PC-3 (cell line): ENCODE measurements at regions of chr15 and their contacts with region 1.

Region 1: GRCh38 chr15:43185157-43186017 is at the start of gene CCNDBP1:
- DNase-seq: peak; percentile 91
- ATAC-seq: peak; percentile 93
- H3K4me3 ChIP-seq: peak within 1 kb of the TSS; percentile 92
- H3K27ac ChIP-seq: peak within 1 kb of the TSS; percentile 41
- H3K4me1 ChIP-seq: peaks cover 24% of the 10 kb centered on the region
- H3K27me3 ChIP-seq: no peaks in the 10 kb centered on the region
- CTCF ChIP-seq: peak; percentile 47
- total RNA-seq, gene CCNDBP1: 34.3 and 38.5 TPM in 2 replicates

Region 2: DNA sequence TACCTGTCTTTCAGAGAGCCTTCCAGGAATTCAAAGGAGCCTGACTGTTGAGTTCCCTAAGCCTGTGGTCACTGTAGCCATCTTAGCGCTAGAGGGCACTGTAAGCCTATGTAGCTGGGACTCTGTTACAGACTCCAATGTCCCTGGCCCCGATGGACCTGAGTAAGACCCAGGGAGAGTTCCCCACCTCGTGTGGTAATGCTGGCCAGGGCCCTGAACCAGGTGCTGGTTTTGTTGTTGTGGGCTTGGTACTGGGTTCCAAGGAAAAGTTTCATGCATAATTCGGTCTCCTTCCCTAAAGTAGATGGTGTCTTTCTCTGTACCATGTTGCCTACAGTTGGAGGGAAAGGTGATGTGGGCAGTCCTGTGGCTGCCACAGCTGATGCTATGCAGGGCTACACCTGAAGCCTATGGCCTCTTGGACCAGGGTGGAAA is 480.9 kb before region 1 on chr15:
- CTCF ChIA-PET with region 1: no interaction called
- POLR2A ChIA-PET with region 1: no interaction called
- intact Hi-C with region 1: loop called (anchors 10 kb)
- DNase-seq: peak; percentile 90
- ATAC-seq: peak; percentile 94
- H3K4me3 ChIP-seq: no peak overlapping the region
- H3K27ac ChIP-seq: no peak overlapping the region
- H3K4me1 ChIP-seq: peaks cover 22% of the 10 kb centered on the region
- H3K27me3 ChIP-seq: no peaks in the 10 kb centered on the region
- CTCF ChIP-seq: peak; percentile 97

Region 3: DNA sequence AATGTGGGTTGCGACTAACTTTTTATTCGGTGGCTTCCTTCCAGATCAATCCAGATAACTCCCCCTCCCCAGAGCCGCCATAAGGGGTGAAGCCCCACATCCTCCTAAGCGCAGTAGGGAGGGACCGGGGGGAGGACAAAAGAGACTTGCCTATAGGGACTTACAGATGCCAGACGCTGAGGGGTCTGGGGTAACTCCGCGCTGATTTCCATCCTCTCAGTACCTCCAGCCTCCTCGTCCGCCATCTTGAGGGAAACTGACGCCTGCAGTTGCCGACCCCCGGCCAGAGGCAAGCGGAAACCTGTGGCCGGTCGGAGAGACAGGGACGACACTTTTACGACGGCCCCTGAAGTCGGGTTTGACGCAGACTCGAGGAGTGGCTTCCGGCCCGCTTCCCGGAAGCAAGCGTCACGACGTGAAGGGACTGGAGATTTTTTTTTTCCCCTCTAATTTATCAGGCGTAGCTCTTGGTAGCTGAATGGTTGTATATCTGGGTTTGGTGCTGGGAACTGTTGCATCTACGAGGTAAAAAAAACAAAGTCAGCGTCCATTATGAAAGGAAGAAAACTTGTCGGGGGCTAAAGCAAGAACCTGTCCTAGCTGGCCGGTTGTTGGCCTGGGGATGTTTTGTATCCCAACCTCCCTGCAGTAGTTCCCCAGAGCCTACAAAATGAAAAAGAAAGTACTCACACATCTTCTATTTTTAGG is 79.5 kb before region 1 on chr15 and contains the start of gene UBR1:
- CTCF ChIA-PET with region 1: no interaction called
- POLR2A ChIA-PET with region 1: interaction called, 5 read pairs
- intact Hi-C with region 1: loop called (anchors 10 kb)
- DNase-seq: peak; percentile 86
- ATAC-seq: peak; percentile 93
- H3K4me3 ChIP-seq: peak within 1 kb of the TSS; percentile 76
- H3K27ac ChIP-seq: peak within 1 kb of the TSS; percentile 39
- H3K4me1 ChIP-seq: peaks cover 12% of the 10 kb centered on the region
- H3K27me3 ChIP-seq: no peaks in the 10 kb centered on the region
- CTCF ChIP-seq: no peak
- total RNA-seq, gene UBR1: 18.3 and 22.6 TPM in 2 replicates

Region 4: DNA sequence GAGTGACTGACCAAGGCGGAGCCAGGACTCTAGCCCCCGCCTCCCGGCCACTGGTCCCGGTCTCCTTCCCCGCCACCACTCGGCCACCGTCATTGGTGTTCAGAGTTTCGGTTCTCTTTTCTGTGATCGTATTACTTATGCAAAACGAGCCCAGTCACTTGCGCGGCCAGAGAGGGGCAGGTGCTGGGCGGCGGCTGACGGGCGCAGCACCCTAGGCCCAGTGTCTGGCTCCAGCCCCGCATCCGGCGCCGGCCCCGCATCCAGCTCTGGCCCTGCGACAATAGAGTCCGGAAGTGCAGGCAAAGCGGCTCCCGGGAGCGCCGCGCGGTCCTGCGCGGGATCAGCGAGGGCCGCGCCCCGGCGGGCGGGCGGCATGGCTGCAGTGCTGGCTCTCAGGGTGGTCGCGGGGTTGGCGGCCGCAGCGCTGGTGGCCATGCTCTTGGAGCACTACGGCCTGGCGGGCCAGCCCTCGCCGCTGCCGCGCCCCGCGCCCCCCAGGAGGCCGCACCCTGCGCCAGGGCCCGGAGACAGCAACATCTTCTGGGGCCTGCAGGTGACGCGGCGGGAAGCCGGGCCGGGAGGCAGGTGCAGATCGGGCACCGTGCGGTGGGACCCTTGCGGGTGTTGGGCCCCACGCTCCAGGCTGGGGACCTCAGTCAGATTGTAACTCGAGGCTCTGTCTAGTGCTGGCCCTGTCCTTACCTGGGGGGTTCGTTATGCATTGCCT is 51.8 kb before region 1 on chr15 and contains the start of gene TMEM62:
- CTCF ChIA-PET with region 1: no interaction called
- POLR2A ChIA-PET with region 1: no interaction called
- intact Hi-C with region 1: loop called (anchors 2 kb)
- DNase-seq: peak; percentile 86
- ATAC-seq: peak; percentile 88
- H3K4me3 ChIP-seq: peak within 1 kb of the TSS; percentile 86
- H3K27ac ChIP-seq: peak within 1 kb of the TSS; percentile 24
- H3K4me1 ChIP-seq: peaks cover 23% of the 10 kb centered on the region
- H3K27me3 ChIP-seq: no peaks in the 10 kb centered on the region
- CTCF ChIP-seq: no peak; the same call in 1 of the 2 replicates
- total RNA-seq, gene TMEM62: 19.6 and 31.6 TPM in 2 replicates

Region 5: GRCh38 chr15:43143203-43143941 is 42.0 kb before region 1 on chr15:
- CTCF ChIA-PET with region 1: interaction called, 14 read pairs
- POLR2A ChIA-PET with region 1: no interaction called
- intact Hi-C with region 1: no loop called
- DNase-seq: peak; percentile 68
- ATAC-seq: peak; percentile 78
- H3K4me3 ChIP-seq: no peak overlapping the region
- H3K27ac ChIP-seq: 0 out of 2 replicates have a peak overlapping the region, but pooled peaks have one; percentile 16
- H3K4me1 ChIP-seq: peaks cover 13% of the 10 kb centered on the region; the same call in 1 of the 2 replicates
- H3K27me3 ChIP-seq: no peaks in the 10 kb centered on the region
- CTCF ChIP-seq: no peak

Region 6: DNA sequence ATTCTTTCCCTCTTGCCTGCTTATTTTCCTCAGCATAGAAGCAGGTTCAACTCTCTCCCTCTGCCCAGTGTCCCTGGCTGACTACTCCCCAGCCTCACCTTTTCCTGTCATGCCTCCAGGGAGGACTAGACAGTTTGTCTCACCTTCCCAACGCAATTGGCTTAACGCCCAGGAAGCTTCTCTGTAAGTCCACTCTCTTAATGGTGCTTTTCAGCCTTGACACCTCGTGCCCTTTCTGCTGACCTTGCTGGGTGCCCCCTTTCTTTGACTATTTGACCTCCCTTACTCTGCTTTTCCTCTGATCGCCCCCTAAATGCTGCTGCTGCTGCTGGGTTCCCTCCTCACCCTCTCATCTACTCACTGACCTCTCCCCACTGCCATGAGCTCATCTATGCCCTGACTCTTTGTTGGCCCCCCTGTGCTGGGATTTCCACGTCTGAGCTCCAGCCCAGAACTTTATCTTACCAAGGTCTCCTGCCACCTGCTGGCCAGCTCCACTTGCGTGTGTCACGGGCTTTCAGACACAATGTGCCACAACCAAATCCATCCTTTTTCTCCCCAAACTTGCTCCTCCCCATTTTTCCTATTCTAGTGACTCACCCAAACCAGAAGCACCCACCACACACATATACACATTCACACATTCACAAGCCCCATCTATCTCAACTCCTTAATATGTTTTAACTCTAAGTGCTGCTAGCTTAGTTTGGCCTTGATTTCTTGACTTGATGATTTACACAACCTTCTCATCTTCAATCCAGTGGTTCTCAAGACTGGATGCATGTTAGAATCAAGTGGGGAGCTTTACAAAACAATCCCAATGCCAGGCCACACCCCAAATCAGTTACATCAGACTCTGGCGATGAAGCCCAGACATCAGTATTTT is 18.9 kb after region 1 on chr15:
- CTCF ChIA-PET with region 1: no interaction called
- POLR2A ChIA-PET with region 1: interaction called, 4 read pairs
- intact Hi-C with region 1: loop called (anchors 1 kb)
- DNase-seq: peak; percentile 73
- ATAC-seq: peak; percentile 88
- H3K4me3 ChIP-seq: no peak overlapping the region
- H3K27ac ChIP-seq: no peak overlapping the region
- H3K4me1 ChIP-seq: peaks cover 7% of the 10 kb centered on the region; the same call in 1 of the 2 replicates
- H3K27me3 ChIP-seq: no peaks in the 10 kb centered on the region
- CTCF ChIP-seq: peak; percentile 92

Region 7: GRCh38 chr15:43225201-43225949 is 40.0 kb after region 1 on chr15:
- CTCF ChIA-PET with region 1: no interaction called
- POLR2A ChIA-PET with region 1: no interaction called
- intact Hi-C with region 1: no loop called
- DNase-seq: peak; percentile 84
- ATAC-seq: peak; percentile 99
- H3K4me3 ChIP-seq: no peak overlapping the region
- H3K27ac ChIP-seq: no peak overlapping the region
- H3K4me1 ChIP-seq: no peaks in the 10 kb centered on the region
- H3K27me3 ChIP-seq: no peaks in the 10 kb centered on the region; the same call in 1 of the 2 replicates
- CTCF ChIP-seq: peak; percentile 93

Region 8: DNA sequence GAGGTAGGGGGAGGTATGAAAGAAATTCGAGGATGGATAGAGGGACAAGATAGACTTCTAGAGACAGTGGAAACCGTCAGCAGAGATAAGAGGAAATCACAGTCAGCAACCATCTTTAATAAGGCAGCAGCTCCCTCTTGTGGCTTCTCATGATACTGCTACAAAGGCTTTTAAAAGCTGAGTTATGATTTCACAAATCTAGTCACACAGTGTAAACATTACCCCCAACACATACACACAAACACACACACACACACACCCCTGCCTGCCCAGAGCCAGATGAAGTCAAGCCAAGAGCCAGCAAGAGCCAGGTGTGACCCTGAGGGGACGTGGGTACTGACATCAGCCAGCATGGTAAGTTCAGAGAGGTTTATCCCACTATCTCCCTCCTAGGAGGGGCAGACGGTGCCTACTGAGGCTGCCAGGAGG is 100.2 kb after region 1 on chr15:
- CTCF ChIA-PET with region 1: no interaction called
- POLR2A ChIA-PET with region 1: no interaction called
- intact Hi-C with region 1: loop called (anchors 1 kb)
- DNase-seq: peak; percentile 89
- ATAC-seq: peak; percentile 80
- H3K4me3 ChIP-seq: 0 out of 2 replicates have a peak overlapping the region, but pooled peaks have one; percentile 24
- H3K27ac ChIP-seq: no peak overlapping the region
- H3K4me1 ChIP-seq: no peaks in the 10 kb centered on the region; the same call in 1 of the 2 replicates
- H3K27me3 ChIP-seq: peaks cover 19% of the 10 kb centered on the region; the same call in 1 of the 2 replicates
- CTCF ChIP-seq: peak; percentile 92